HEK293T (cell line): ENCODE measurements at regions of chr1 and their contacts with region 1.

Region 1: GRCh38 chr1:39098546-39099250 is 72.5 kb downstream of the NDUFS5 start:
- DNase-seq: peak; percentile 82

Region 2: DNA sequence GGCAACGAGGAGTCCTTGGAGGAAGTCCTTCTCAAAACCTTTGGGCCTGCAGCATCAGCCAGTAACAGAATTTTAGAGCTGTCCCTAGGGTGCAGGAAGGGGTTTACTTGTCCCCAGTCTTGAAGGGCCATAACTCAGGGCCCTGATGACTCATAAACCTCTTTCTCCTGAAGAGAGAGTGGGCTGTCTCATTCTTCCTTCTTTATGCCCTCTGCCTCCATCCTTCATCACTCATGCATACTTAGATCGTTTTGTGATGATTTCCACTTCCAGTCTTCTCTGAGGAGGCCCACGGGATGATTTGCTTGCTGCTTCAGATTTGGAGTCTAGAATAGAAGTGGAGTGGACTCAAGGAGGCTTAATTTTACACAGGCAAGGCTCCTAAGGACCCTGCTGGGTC is 12.3 kb before region 1 on chr1:
- CTCF ChIA-PET with region 1: interaction called, 10 read pairs
- POLR2A ChIA-PET with region 1: no interaction called
- DNase-seq: no peak

Region 3: DNA sequence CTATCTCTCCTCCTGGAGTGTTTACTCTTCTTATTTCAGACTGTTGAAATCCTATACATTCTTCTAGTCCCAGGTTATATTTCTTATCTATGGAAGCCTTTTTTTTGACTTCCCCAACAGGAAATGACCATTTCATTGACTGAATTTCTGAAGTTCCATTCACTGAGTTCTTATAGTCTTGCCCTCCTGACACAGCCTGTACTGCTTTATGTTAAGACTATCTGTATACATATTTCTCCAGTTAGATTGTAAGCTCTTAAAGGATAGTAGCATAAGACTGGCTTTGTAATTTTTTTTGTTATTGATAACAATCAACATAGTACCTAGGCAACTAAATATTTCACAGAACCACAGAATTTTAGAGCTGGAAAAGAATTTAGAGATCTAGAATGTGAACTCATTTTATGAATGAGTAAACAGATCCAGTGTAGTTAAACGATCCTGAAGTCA is 90.9 kb after region 1 on chr1:
- CTCF ChIA-PET with region 1: interaction called, 30 read pairs
- POLR2A ChIA-PET with region 1: no interaction called
- DNase-seq: no peak

Region 4: GRCh38 chr1:39258146-39258924 is 159.6 kb after region 1 on chr1:
- CTCF ChIA-PET with region 1: interaction called, 20 read pairs
- POLR2A ChIA-PET with region 1: no interaction called
- DNase-seq: peak; percentile 82